Esophagus squamous epithelium (tissue), 5 donors: ENCODE measurements at regions of chr3 and their contacts with region 1.

Region 1: GRCh38 chr3:107680698-107681097 is 157.9 kb downstream of the BBX start:
- DNase-seq: no peak
- H3K4me3 ChIP-seq: no peak overlapping the region
- H3K27ac ChIP-seq: no peak overlapping the region
- H3K4me1 ChIP-seq: peaks cover 0 to 6% (median 0%) of the 10 kb centered on the region in 3 donors
- H3K27me3 ChIP-seq: no peaks in the 10 kb centered on the region
- CTCF ChIP-seq: no peak
- POLR2A ChIP-seq: no peak

Region 2: DNA sequence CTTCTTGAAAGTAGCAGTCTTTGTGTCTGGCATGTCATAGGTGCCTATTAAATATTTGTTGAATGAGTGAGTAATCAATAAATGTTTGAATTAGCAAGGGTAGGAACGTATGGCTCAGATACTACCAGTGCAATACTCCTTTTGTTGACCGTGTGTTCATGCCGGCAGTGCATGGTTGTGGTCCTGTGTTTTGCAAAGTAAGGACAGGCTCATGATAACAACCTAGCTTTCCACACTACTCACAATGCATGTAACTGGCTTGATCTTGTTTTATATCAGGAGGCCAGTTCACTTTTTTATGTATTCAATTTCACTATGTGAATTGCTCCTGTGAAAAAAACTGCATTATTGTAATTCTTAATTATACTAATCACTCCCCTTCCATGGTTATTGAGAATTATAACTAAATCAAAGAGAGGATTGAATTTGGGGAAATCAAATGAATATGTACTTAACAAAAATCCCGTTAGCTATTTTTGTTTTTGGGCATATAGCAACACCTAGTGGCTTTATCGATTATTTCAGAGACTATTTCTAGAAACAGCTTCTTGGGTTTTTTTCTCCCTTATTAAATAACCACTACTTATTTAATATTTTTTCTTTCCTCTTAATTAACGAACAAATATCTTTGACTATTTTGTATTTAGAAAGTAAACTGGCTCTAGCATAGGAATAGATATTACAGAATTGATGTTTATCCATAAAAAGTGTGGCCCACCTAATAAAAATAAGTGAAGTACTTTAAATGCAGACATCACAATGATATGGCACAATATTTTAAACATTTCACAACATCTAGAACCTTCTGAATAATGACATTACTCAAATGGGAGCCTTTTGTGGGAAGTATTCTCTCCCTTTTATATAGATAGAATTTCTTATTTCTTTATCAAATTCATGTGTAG is 60.5 kb after region 1 on chr3:
- intact Hi-C with region 1: loop called (anchors 10 kb)
- DNase-seq: no peak
- H3K4me3 ChIP-seq: no peak overlapping the region
- H3K27ac ChIP-seq: no peak overlapping the region
- H3K4me1 ChIP-seq: no peaks in the 10 kb centered on the region
- H3K27me3 ChIP-seq: no peaks in the 10 kb centered on the region
- CTCF ChIP-seq: peak in 5 of 6 experiments; percentile 37 to 73 (median 46)
- POLR2A ChIP-seq: no peak

Region 3: GRCh38 chr3:108100906-108101660 is 420.4 kb after region 1 on chr3:
- intact Hi-C with region 1: no loop called
- DNase-seq: no peak
- H3K4me3 ChIP-seq: no peak overlapping the region
- H3K27ac ChIP-seq: no peak overlapping the region
- H3K4me1 ChIP-seq: no peaks in the 10 kb centered on the region
- H3K27me3 ChIP-seq: no peaks in the 10 kb centered on the region
- CTCF ChIP-seq: no peak
- POLR2A ChIP-seq: no peak